Posterior vena cava (tissue), 2 donors: ENCODE measurements at regions of chr10 and their contacts with region 1.

Region 1: GRCh38 chr10:129601737-129602136 is 134.7 kb downstream of the MGMT start:
- DNase-seq: no peak

Region 2: GRCh38 chr10:129556316-129556715 is 45.4 kb before region 1 on chr10:
- intact Hi-C with region 1: loop called in 1 of 2 experiments (anchors 1 kb)
- DNase-seq: no peak